ENCODE measurements at regions of chr18 and their contacts with region 1.

Region 1: DNA sequence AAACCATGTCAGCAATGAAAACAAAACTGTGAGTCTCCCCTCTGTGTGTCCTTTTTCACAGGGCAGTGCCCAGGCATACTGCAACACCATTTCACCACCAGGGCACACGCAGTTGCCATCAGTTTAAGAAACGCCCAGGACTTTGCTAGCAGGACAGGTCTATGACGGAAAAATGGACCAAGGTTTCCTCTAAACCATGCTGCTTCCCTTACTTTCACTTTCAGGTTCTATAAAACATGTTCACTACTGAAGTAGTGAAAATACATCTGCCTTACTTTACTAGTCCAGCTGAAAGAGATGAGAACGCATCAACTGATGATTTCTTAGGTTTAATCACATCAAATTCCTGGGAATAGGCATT is 110.5 kb downstream of the TCF4 start:
- DNase-seq: no peak
- ATAC-seq: peak; percentile 85

Region 2: DNA sequence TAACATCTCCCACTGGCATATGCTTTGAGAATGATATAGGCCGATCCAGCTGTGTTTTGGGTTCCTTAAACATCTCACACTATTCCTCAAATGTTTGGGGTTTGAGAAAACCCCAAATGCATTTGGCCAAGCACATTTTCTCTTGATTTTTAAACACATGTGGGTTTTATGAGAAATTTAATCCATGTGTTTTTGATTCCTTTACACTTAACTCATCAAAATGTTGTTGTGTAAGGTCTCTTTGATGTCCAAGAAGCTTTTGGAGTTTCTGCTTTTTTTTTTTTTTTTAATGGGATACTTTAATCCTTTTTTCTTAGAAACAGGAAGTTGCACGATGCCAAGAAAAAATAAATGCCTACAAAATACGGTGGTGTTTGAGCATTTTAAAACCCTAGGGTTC is 450.4 kb after region 1 on chr18:
- intact Hi-C with region 1: loop called (anchors 5 kb)
- DNase-seq: no peak
- ATAC-seq: no peak